Right cardiac atrium (tissue), 5 donors: ENCODE measurements at regions of chr7 and their contacts with region 1.

Region 1: DNA sequence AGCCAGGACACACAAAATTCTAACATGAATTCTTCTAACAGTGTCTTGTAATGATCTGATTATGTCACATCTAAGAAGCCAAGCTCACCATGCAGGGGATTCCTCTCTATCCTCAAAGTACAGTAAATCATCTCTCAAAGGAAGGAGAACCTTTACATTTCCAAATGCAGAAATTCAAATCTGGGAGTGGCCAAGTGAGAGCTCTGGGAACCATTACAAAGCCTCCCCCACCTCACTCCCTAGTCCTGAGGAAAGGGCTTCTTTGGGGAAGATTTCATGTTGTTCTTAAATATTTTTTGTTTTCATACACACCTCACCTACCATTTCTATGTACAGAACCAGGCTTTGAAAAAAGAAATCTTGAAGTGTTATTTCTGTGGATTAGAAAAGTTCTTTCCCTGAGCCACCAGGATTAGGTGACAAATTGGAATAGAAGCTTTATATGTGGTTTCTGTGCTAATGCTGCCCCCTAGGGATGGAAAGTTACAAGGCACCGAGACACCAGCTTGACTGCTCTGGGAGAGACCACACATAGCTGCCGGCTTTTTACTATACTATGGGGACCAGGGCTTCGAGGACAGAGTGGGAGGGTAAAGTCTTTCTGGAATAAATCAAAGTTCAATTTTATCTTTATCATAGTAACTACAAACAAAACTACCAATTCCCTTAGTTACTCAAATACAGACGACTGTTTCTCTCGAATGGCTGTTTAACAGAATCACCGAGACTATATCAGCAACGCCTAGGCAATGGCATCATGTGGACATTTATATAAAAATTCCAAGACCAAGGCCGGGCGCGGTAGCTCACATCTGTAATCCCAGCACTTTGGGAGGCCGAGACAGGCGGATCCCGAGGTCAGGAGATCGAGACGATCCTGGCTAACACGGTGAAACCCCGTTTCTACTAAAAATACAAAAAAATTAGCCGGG is 116.1 kb downstream of the RNF216 start:
- DNase-seq: peak in 2 of 3 donors; percentile 60 to 78
- ATAC-seq: peak; percentile 67 to 73
- H3K4me3 ChIP-seq: no peak overlapping the region
- H3K27ac ChIP-seq: no peak overlapping the region
- H3K4me1 ChIP-seq: peaks cover 10% of the 10 kb centered on the region
- H3K27me3 ChIP-seq: no peaks in the 10 kb centered on the region

Region 2: DNA sequence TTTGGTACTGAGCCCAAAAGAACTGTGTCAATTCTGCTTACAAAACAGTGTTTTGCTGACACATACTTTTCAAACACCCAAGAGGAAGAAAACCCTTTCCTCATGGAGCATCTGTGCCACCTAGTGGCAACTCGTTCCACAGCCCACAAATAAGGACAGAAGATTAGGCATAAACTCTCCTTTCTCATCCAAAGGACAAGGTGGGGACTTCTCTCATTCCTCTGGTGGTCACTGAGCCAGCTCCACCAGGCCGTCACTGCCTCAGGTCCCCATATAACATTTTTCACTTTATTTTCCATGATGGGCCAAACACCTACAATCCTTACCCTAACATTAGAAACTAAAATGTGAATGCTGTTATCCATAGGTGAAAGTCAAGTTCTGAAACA is 39.2 kb after region 1 on chr7:
- intact Hi-C with region 1: loop called in 2 of 4 experiments (anchors 5 kb)
- DNase-seq: peak; percentile 68 to 90 (median 83)
- ATAC-seq: peak; percentile 76 to 78
- H3K4me3 ChIP-seq: no peak overlapping the region
- H3K27ac ChIP-seq: no peak overlapping the region
- H3K4me1 ChIP-seq: peaks cover 2% of the 10 kb centered on the region
- H3K27me3 ChIP-seq: no peaks in the 10 kb centered on the region